Activated T-helper 1 cell treated with anti-CD3 and anti-CD28 coated beads, Interleukin-12 subunit alpha, Interleukin-12 subunit beta, Interleukin-2, Interleukin-4 antibody, amounts not matched to agents 30 ng/mL and 10 ng/mL and 1 ng/mL, durations not matched to agents 14 hours and 24 hours and 36 hours (primary cell): ENCODE measurements at regions of chr4 and their contacts with region 1.

Region 1: DNA sequence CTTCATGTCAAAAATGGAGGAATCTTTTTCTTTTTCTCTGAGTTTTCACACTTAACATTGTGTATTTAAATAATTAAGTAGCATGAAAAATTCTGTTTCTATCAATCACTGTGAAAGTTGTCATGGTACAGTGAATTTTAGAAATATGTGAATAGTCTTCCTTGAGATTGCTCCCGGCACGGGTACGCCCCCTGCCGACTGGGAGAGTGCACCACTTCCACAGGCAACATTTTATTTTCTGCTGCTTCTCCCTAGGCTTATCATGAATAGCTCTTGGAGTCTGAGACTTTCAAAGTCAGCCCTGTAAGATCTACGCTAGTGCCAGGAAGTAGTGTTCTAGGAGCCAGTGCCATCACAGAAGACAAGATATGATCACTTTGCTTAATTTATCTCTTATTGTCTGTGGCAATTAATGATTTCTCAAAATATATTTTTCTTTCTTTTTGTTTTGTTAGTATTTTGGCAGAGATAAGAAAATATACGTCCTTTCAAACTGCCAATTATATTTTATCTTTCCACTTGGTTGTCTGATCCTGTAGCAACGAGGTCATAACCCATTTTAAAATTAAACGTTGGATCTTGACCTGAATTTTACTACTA is 763.8 kb upstream of the AADAT start:
- DNase-seq: no peak
- H3K4me3 Mint-ChIP-seq: no peak overlapping the region
- H3K27ac Mint-ChIP-seq: no peak overlapping the region
- H3K4me1 Mint-ChIP-seq: no peaks in the 10 kb centered on the region
- H3K27me3 Mint-ChIP-seq: no peaks in the 10 kb centered on the region

Region 2: GRCh38 chr4:170138580-170139194 is 714.8 kb before region 1 on chr4:
- intact Hi-C with region 1: loop called (anchors 1 kb)
- DNase-seq: peak; percentile 34
- H3K4me3 Mint-ChIP-seq: no peak overlapping the region
- H3K27ac Mint-ChIP-seq: no peak overlapping the region
- H3K4me1 Mint-ChIP-seq: no peaks in the 10 kb centered on the region
- H3K27me3 Mint-ChIP-seq: no peaks in the 10 kb centered on the region

Region 3: GRCh38 chr4:171181099-171181498 is 327.6 kb after region 1 on chr4:
- intact Hi-C with region 1: no loop called
- DNase-seq: no peak
- H3K4me3 Mint-ChIP-seq: no peak overlapping the region
- H3K27ac Mint-ChIP-seq: no peak overlapping the region
- H3K4me1 Mint-ChIP-seq: no peaks in the 10 kb centered on the region
- H3K27me3 Mint-ChIP-seq: no peaks in the 10 kb centered on the region